ENCODE measurements at regions of chr10 and their contacts with region 1.

Region 1: GRCh38 chr10:108647533-108647932 is 1275.8 kb downstream of the XPNPEP1 start:
- DNase-seq: no peak
- H3K4me3 ChIP-seq: no peak overlapping the region
- H3K27ac ChIP-seq: no peak overlapping the region
- H3K4me1 ChIP-seq: no peaks in the 10 kb centered on the region
- H3K27me3 ChIP-seq: no peaks in the 10 kb centered on the region
- CTCF ChIP-seq: no peak
- POLR2A ChIP-seq: no peak

Region 2: DNA sequence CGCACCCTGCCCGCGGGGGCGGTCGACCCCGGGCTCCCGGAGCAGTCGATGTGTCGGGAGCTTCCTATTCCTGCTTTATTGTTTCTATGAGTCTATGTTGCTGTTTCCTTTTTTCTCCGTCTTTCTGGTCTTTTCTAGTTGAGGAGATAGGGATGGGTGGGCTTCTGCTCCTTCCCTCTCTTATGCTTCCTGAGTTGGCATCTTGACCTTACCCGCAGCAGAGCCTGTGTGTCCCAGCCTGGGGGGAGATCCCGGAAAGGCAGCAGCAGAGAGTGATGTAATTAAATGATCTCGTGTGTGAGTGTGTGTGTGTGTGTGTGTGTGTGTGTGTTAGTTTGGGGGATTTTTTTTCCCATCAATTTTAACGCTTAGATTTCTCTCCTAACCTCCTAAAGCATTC is 1482.5 kb before region 1 on chr10:
- CTCF ChIA-PET with region 1: no interaction called
- POLR2A ChIA-PET with region 1: no interaction called
- dilution Hi-C with region 1: no loop called
- intact Hi-C with region 1: loop called (anchors 5 kb)
- DNase-seq: no peak
- H3K4me3 ChIP-seq: no peak overlapping the region
- H3K27ac ChIP-seq: no peak overlapping the region
- H3K4me1 ChIP-seq: no peaks in the 10 kb centered on the region
- H3K27me3 ChIP-seq: no peaks in the 10 kb centered on the region
- CTCF ChIP-seq: no peak
- POLR2A ChIP-seq: no peak